CD8-positive, alpha-beta T cell (primary cell): ENCODE measurements at regions of chr4 and their contacts with region 1.

Region 1: DNA sequence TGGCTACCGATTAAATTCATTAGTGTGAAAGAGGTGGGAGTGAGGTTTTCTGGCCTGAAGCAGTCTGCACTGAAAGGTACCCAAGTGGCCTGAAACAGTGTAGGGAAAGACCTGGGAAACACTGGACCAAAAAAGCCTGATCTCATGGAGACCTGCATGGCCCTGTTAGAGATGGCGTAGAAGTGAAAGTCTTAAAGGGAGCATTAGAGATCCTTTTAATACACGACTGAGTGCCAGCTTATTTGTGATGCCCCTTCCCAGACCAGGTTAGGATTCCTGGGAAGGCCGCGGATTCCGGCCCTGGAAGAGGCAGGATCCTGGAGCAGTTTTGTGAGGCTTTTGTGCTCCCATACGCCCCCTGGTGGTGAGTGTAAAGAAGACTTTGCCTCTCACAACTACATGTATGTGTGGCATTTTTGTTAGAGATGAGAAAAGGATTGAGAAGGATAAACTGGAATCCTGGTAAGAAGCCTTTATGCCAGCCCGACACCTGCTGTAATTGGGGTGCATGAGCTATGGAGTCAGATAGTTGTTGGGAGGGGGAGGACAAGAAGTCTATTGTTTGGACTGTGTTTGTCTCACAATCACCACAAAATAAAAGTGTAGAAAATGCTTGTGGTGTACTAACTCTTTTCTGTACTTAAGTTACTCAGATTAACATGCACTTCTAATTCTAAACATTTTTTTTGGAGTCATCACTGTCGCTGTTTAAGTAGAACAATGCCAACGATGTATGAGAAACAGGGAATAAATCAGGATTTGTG is 54.0 kb downstream of the JADE1 start:
- DNase-seq: peak; percentile 24 to 80 (median 67)
- ATAC-seq: peak; percentile 26
- H3K4me3 ChIP-seq: no peak overlapping the region
- H3K4me3 Mint-ChIP-seq: no peak overlapping the region
- H3K27ac ChIP-seq: peak overlapping the region in 1 of 2 experiments; percentile 52
- H3K27ac Mint-ChIP-seq: peak overlapping the region; percentile 75
- H3K4me1 ChIP-seq: peaks cover 24% of the 10 kb centered on the region
- H3K4me1 Mint-ChIP-seq: peaks cover 35% of the 10 kb centered on the region
- H3K27me3 ChIP-seq: no peaks in the 10 kb centered on the region
- H3K27me3 Mint-ChIP-seq: no peaks in the 10 kb centered on the region
- CTCF ChIP-seq: peak; percentile 78

Region 2: DNA sequence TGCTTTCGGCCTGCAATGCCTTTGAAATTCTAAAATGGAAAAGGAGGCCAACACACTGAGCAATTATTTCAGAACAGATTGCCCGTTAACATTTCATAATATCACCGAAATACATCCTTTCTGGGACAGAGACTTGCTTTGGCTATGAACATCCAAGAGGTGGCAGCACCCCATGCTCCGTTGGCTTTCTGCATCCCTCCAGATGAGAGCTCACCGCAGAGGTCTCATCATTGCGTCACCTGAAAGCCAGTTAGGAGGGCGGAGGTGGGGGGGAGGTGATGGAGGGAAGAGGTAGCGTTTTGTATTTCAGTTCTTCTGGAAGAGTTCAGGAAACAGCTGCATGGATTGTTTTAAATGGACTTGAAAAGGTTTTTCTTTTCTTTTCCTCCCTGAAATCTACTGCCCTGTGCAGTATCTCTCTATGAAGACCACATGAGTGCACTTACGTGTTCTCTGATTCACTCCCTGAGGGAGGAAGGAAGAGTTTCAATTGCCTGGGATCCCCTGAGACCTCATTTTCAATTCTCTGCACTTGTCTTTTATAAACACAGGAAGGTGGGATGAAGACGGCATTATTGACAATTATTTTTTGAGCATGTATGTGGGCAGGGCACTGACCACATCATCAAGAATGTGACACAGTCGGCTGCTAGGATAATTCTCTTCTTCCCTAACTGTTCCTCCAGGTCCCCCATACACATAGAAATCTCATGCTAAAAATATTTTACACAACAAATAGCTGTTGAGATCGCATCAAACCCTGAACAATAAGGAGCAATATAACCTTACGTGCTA is 409.0 kb before region 1 on chr4:
- CTCF ChIA-PET with region 1: interaction called, 3 read pairs
- POLR2A ChIA-PET with region 1: no interaction called
- intact Hi-C with region 1: loop called (anchors 5 kb)
- DNase-seq: peak; percentile 21 to 80 (median 65)
- ATAC-seq: peak; percentile 100
- H3K4me3 ChIP-seq: no peak overlapping the region
- H3K4me3 Mint-ChIP-seq: no peak overlapping the region
- H3K27ac ChIP-seq: no peak overlapping the region
- H3K27ac Mint-ChIP-seq: no peak overlapping the region
- H3K4me1 ChIP-seq: no peaks in the 10 kb centered on the region
- H3K4me1 Mint-ChIP-seq: peaks cover 7% of the 10 kb centered on the region
- H3K27me3 ChIP-seq: no peaks in the 10 kb centered on the region
- H3K27me3 Mint-ChIP-seq: peaks cover 7% of the 10 kb centered on the region
- CTCF ChIP-seq: peak; percentile 65

Region 3: DNA sequence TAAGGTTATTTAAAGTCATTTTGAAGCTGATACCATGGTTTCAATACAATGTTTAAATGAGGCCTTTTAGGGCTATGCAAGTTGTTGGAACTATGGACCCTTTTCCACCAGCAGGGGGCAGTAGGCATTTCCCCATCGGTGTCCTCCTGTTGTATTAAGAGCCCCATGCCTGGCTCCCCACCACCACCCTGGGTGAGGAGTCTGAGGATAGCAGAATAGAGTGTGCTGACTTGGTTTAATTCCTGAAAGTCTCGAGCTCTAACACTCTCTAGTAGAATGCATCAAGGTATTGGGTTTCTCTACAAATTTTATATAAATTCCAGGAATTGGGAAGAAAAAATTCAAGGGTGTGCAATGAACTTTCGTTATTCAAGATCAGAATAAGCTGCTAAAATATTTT is 288.8 kb before region 1 on chr4:
- CTCF ChIA-PET with region 1: no interaction called
- POLR2A ChIA-PET with region 1: no interaction called
- intact Hi-C with region 1: loop called in 1 of 2 experiments (anchors 2 kb)
- DNase-seq: peak; percentile 1 to 69 (median 58)
- ATAC-seq: no peak
- H3K4me3 ChIP-seq: no peak overlapping the region
- H3K4me3 Mint-ChIP-seq: no peak overlapping the region
- H3K27ac ChIP-seq: no peak overlapping the region
- H3K27ac Mint-ChIP-seq: no peak overlapping the region
- H3K4me1 ChIP-seq: no peaks in the 10 kb centered on the region
- H3K4me1 Mint-ChIP-seq: no peaks in the 10 kb centered on the region
- H3K27me3 ChIP-seq: no peaks in the 10 kb centered on the region
- H3K27me3 Mint-ChIP-seq: peaks cover 7% of the 10 kb centered on the region
- CTCF ChIP-seq: peak; percentile 21

Region 4: DNA sequence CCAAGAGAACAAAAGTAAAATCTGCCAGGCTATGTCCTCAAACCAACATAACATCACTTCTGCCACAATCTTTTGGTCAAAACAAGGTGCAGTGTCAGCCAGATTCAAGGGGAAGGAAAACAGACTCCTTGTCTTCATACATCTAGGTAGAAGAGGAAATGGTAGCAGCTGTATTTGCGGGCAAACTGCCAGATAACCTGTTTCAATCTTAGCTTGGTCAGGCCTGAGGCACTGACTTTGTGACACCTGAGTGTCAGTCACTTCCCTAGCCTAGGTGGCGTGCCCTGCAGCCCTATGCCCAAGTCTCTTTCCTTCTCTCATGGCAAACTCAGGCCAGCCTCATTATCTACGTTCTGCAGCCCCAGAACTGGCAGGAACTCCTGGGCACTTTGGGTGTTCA is 200.2 kb before region 1 on chr4:
- CTCF ChIA-PET with region 1: no interaction called
- POLR2A ChIA-PET with region 1: no interaction called
- intact Hi-C with region 1: no loop called
- DNase-seq: peak in 2 of 9 experiments; percentile 26 to 40
- ATAC-seq: no peak
- H3K4me3 ChIP-seq: no peak overlapping the region
- H3K4me3 Mint-ChIP-seq: no peak overlapping the region
- H3K27ac ChIP-seq: no peak overlapping the region
- H3K27ac Mint-ChIP-seq: no peak overlapping the region
- H3K4me1 ChIP-seq: no peaks in the 10 kb centered on the region
- H3K4me1 Mint-ChIP-seq: no peaks in the 10 kb centered on the region
- H3K27me3 ChIP-seq: no peaks in the 10 kb centered on the region
- H3K27me3 Mint-ChIP-seq: no peaks in the 10 kb centered on the region
- CTCF ChIP-seq: no peak

Region 5: DNA sequence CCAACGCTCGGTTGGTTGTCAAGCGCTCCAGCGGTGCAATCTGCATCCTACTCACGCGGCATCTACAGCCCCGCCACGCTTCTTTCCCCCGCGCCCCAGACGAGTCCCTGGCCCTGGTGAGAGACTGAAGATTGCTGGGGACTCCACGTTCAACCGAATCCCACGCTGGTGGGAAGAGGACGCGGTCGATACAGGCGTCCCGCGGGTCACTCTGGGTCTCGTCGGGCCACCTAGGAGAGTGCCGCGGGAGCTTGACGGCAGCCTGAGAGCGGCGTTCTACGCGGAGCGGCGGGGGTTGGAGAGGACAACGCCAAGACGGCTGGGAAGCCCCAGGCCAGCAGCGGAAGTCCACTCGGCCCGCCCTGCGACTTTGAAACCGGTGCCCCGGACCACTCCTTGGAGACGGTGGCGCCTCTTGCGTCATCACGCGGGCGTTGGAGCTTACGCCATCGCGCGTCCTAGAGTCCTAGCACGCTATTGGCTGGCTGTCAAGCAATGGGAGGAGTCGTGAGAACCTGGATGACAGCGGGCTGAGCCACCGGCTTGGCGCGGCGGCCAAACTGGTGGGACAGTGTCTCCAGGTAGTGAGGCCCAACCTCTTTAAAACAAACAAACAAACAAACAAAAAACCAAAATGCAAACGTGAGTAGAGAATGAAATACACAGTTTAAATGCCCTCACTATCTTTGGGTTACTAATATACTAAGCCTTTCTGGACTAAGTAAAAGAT is 229.9 kb after region 1 on chr4 and contains the start of gene SCLT1:
- CTCF ChIA-PET with region 1: no interaction called
- POLR2A ChIA-PET with region 1: no interaction called
- intact Hi-C with region 1: loop called in 1 of 2 experiments (anchors 5 kb)
- DNase-seq: peak; percentile 88 to 99 (median 96)
- ATAC-seq: peak; percentile 92
- H3K4me3 ChIP-seq: peak within 1 kb of the TSS; percentile 87 to 94
- H3K4me3 Mint-ChIP-seq: peak within 1 kb of the TSS; percentile 24
- H3K27ac ChIP-seq: peak within 1 kb of the TSS; percentile 94 to 98
- H3K27ac Mint-ChIP-seq: no peak within 1 kb of the TSS
- H3K4me1 ChIP-seq: peaks cover 40% of the 10 kb centered on the region
- H3K4me1 Mint-ChIP-seq: peaks cover 49% of the 10 kb centered on the region
- H3K27me3 ChIP-seq: no peaks in the 10 kb centered on the region
- H3K27me3 Mint-ChIP-seq: no peaks in the 10 kb centered on the region
- CTCF ChIP-seq: no peak
- total RNA-seq, gene SCLT1: 19.8 to 21.7 TPM